Endothelial cell of umbilical vein (primary cell): ENCODE measurements at regions of chr4 and their contacts with region 1.

Region 1: DNA sequence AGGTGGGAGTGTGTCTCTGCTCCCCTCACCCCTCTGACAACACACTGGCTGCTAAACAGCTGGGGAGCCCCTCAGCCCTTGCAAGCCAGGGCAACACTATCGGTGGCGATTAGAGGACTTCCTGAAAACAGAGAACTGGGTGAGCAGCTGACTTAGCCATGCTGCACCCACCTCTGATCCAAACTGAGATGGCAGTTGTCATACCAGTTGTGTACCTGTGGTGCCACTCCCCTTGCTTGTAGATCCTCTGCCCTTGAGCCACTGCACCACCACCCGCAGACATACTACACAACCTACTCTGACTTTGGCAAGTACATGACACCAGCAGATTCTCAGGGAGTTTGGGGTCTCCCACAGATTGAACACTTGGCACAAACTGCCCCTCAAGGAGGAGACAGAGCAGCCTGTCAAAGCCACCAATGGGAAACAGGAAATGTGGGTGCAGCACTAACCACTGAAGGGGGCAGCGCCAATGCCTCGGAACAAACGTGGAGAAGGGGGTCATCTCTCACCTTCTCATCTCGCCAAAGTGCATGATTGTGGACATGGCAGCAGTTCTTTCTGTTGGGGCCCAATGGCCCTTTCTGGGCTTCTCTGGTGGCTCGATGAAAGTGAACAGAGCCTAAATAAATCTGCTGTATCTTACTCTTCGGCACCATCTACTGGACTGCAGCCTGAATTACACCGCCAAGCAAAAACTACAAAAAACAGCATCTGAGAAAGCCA is 119.8 kb downstream of the NEK1 start:
- DNase-seq: peak; percentile 52
- H3K4me3 ChIP-seq: no peak overlapping the region
- H3K27ac ChIP-seq: no peak overlapping the region
- H3K4me1 ChIP-seq: no peaks in the 10 kb centered on the region
- H3K27me3 ChIP-seq: no peaks in the 10 kb centered on the region
- CTCF ChIP-seq: peak; percentile 70 to 72
- POLR2A ChIP-seq: no peak

Region 2: GRCh38 chr4:168923526-168924194 is 568.9 kb before region 1 on chr4:
- CTCF ChIA-PET with region 1: interaction called, 96 read pairs
- POLR2A ChIA-PET with region 1: no interaction called
- dilution Hi-C with region 1: loop called (anchors 10 kb)
- intact Hi-C with region 1: loop called (anchors 1 kb)
- DNase-seq: peak; percentile 67
- H3K4me3 ChIP-seq: no peak overlapping the region
- H3K27ac ChIP-seq: no peak overlapping the region
- H3K4me1 ChIP-seq: no peaks in the 10 kb centered on the region
- H3K27me3 ChIP-seq: no peaks in the 10 kb centered on the region
- CTCF ChIP-seq: peak; percentile 57 to 66
- POLR2A ChIP-seq: no peak

Region 3: DNA sequence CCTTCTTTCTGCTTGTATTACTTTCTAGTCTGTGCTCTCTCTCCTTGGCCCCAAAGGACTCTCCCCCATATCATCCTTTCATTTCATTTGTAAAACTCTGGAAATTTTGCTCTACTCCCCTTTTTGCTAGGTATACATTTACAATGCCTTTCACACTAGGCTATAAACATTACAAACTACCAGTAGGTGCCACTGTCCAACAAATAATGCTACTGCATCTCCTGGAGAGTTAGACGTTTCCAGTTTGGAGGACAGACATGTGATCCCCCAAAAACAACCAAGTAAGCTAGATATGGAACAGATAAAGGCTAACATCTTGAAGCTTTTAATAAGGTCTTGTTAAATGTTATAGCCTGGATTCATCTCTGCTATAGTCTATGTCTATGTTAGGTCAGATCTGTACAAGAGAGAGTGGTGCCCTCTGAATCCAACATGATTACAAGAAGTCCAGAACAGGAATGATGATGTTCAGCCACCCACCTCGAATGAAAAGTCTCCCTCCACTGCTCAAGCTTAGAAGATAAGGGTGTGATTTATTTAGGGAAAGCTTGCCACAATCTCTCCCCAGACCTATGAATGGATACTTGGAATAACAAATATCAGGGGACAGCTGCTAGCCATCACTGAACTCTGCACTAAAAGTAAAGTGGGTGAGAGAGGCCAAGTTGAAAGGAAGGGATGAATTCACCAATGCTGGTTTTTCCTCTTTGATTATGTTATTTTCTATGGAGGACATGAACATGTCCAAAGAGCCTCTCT is 496.9 kb before region 1 on chr4:
- CTCF ChIA-PET with region 1: interaction called, 10 read pairs
- POLR2A ChIA-PET with region 1: no interaction called
- dilution Hi-C with region 1: no loop called
- intact Hi-C with region 1: no loop called
- DNase-seq: peak; percentile 24
- H3K4me3 ChIP-seq: no peak overlapping the region
- H3K27ac ChIP-seq: no peak overlapping the region
- H3K4me1 ChIP-seq: no peaks in the 10 kb centered on the region
- H3K27me3 ChIP-seq: no peaks in the 10 kb centered on the region
- CTCF ChIP-seq: peak in 1 of 2 donors; percentile 3
- POLR2A ChIP-seq: no peak

Region 4: GRCh38 chr4:169510617-169511016 is 18.0 kb after region 1 on chr4:
- CTCF ChIA-PET with region 1: no interaction called
- POLR2A ChIA-PET with region 1: no interaction called
- dilution Hi-C with region 1: no loop called
- intact Hi-C with region 1: no loop called
- DNase-seq: no peak
- H3K4me3 ChIP-seq: no peak overlapping the region
- H3K27ac ChIP-seq: no peak overlapping the region
- H3K4me1 ChIP-seq: no peaks in the 10 kb centered on the region
- H3K27me3 ChIP-seq: no peaks in the 10 kb centered on the region
- CTCF ChIP-seq: no peak
- POLR2A ChIP-seq: no peak

Region 5: DNA sequence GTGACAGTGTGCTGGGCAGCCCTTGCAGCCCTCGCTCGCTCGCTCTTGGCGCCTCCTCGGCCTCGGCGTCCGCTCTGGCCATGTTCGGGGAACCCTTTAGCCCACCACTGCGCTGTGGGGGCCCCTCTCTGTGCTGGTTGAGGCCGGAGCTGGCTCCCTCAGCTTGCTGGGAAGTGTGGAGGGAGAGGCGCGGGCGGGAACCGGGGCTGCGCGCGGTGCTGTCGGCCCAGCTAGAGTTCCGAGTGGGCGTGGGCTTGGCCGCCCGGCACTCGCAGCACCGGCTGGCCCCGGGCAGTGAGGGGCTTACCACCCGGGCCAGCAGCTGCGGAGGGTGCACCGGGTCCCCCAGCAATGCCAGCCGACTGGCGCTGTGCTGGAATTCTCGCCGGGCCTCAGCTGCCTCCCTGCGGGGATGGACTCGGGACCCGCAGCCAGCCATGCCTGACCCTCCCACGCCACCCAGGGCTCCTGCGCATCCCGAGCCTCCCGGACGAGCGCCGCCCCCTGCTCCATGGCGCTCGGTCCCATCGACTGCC is 1550.5 kb after region 1 on chr4:
- CTCF ChIA-PET with region 1: no interaction called
- POLR2A ChIA-PET with region 1: no interaction called
- dilution Hi-C with region 1: no loop called
- intact Hi-C with region 1: no loop called
- DNase-seq: no peak
- H3K4me3 ChIP-seq: no peak overlapping the region
- H3K27ac ChIP-seq: no peak overlapping the region
- H3K4me1 ChIP-seq: no peaks in the 10 kb centered on the region
- H3K27me3 ChIP-seq: no peaks in the 10 kb centered on the region
- CTCF ChIP-seq: no peak
- POLR2A ChIP-seq: no peak